PC-9 (cell line): ENCODE measurements at regions of chr2 and their contacts with region 1.

Region 1: GRCh38 chr2:40488101-40488601 is 36.3 kb upstream of the SLC8A1 start:
- DNase-seq: no peak
- H3K4me3 ChIP-seq: no peak overlapping the region
- H3K27ac ChIP-seq: no peak overlapping the region
- H3K4me1 ChIP-seq: no peaks in the 10 kb centered on the region
- H3K27me3 ChIP-seq: no peaks in the 10 kb centered on the region
- CTCF ChIP-seq: peak; percentile 81

Region 2: DNA sequence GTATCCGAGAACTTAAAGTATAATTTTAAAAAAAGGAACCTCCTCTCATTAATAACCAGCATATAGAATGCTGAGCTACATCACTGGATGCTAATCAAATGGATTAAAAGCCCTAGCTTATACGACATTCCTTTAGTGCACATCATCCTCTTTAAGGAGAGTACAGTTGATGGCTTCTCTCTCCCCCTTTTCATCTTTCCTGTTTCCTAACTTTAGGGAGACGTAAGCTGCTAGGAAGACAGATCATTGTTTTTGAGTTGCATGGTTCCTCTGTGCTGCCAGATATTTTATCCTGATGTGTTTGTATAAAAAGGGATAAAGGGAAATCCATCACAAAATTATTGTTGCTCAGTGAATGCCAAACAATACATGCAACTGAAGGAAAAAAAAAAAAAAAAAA is 130.5 kb before region 1 on chr2:
- CTCF ChIA-PET with region 1: interaction called, 17 read pairs
- POLR2A ChIA-PET with region 1: no interaction called
- intact Hi-C with region 1: no loop called
- DNase-seq: no peak
- H3K4me3 ChIP-seq: no peak overlapping the region
- H3K27ac ChIP-seq: no peak overlapping the region
- H3K4me1 ChIP-seq: no peaks in the 10 kb centered on the region
- H3K27me3 ChIP-seq: no peaks in the 10 kb centered on the region
- CTCF ChIP-seq: no peak

Region 3: DNA sequence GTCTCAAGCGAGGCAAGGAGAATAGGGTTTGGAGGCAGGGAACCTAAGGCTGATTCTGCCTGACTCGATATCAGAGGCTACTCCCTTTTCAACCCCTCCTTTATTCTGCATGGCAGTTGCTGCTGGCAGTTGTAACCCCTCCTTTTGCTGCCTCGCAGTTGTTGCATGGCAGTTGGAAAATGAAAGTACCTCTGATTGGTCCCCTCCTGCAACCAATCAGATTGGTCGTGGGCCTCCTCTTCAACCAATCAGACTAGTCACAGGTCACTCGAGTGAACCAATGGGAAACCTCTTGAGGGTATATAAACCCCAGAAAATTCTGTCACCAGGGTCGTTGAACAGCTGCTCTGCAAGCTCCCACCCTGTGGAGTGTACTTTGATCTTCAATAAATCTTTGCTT is 258.0 kb after region 1 on chr2:
- CTCF ChIA-PET with region 1: interaction called, 16 read pairs
- POLR2A ChIA-PET with region 1: no interaction called
- intact Hi-C with region 1: no loop called
- DNase-seq: no peak
- H3K4me3 ChIP-seq: peak overlapping the region; percentile 15; the same call in 1 of the 2 replicates
- H3K27ac ChIP-seq: no peak overlapping the region
- H3K4me1 ChIP-seq: peaks cover 8% of the 10 kb centered on the region
- H3K27me3 ChIP-seq: no peaks in the 10 kb centered on the region
- CTCF ChIP-seq: no peak